ENCODE measurements at regions of chr16 and their contacts with region 1.

Region 1: DNA sequence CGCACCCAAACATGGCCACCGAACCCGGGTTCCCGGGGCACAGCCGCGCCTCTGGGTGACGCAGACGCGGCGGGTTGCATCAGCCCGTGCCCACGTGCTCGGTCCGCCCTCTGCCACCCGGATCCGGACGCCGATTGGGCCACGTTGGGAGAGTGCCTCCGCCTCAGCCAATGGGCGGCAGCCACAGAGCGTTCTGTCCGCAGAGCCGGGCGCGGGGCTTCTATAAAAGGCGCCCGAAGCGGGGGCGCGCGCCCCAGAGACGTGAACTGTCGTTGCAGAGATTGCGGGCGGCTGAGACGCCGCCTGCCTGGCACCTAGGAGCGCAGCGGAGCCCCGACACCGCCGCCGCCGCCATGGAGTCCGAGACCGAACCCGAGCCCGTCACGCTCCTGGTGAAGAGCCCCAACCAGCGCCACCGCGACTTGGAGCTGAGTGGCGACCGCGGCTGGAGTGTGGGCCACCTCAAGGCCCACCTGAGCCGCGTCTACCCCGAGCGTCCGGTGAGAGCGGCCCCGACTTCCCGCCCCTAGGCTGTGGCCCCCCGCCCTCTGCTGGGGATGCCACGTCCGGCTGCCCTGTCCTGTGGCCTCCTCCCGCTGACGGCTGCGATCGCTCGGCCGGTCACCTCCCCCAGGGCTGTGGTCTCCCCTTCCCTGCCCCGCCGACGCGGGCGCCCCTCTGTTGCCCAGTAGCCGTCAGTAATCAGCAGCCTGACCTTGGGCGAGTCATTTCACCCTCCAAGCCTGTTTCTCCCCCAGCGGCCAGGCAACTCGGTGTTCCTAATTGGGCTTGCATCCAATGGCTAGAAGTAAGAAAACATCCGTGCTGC is at the start of gene HERPUD1:
- DNase-seq: no peak
- ATAC-seq: peak; percentile 80
- H3K4me3 ChIP-seq: peak within 1 kb of the TSS; percentile 88 to 98 (median 95)
- H3K4me3 Mint-ChIP-seq: peak within 1 kb of the TSS; percentile 92
- H3K27ac ChIP-seq: peak within 1 kb of the TSS; percentile 98 to 99
- H3K27ac Mint-ChIP-seq: peak within 1 kb of the TSS; percentile 96
- H3K4me1 ChIP-seq: peaks cover 60 to 66% of the 10 kb centered on the region in 2 donors
- H3K4me1 Mint-ChIP-seq: peaks cover 55% of the 10 kb centered on the region
- H3K27me3 ChIP-seq: no peaks in the 10 kb centered on the region
- H3K27me3 Mint-ChIP-seq: no peaks in the 10 kb centered on the region
- CTCF ChIP-seq: no peak
- total RNA-seq, gene HERPUD1: 1,041 and 1,046 TPM in 2 replicates

Region 2: DNA sequence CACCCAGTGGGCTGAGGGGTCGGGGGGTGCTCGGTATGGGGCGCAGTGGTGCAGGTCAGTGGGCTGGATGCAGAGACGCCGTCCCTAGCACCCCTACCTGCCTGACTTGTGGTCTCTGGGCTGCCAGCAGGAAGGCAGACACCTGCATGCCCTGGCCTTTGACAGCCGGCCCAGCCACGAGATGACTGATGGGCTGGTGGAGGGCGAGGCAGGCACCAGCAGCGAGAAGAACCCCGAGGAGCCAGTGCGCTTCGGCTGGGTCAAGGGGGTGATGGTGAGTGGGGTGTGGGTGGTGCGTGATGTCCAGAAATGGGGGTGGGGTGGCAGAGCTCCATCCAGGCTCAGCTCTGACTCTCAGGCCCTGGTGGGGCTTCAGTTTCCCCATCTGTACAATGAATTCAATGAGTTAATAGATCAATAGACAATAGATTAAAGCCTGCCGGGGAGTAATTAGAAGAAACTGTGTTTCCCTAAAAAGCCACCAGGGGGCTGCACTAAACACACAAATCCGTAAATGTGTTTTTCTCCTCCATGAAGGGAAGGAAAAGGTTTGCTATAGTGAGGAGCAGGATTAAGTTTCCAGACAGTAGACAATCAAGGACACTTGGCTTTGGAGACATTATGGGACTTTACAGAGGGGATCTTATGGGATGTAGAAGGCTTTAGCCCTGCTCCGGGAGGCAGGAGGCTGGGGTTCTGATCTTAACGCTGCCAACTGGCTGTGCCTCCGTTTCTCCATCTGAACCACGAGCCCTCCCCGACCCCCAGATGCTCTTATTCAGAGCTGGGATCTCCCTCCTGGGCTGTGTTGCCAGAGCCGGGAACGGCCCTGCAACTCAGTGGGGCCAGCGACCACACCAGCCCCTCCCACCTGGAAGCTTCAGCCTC is 64.9 kb before region 1 on chr16:
- CTCF ChIA-PET with region 1: interaction called, 140 read pairs
- POLR2A ChIA-PET with region 1: interaction called, 68 read pairs
- intact Hi-C with region 1: loop called (anchors 1 kb)
- DNase-seq: peak; percentile 81
- ATAC-seq: no peak
- H3K4me3 ChIP-seq: no peak overlapping the region
- H3K4me3 Mint-ChIP-seq: peak overlapping the region; percentile 55
- H3K27ac ChIP-seq: no peak overlapping the region
- H3K27ac Mint-ChIP-seq: peak overlapping the region; percentile 69
- H3K4me1 ChIP-seq: peaks cover 21 to 59% of the 10 kb centered on the region in 2 donors
- H3K4me1 Mint-ChIP-seq: peaks cover 37% of the 10 kb centered on the region
- H3K27me3 ChIP-seq: no peaks in the 10 kb centered on the region
- H3K27me3 Mint-ChIP-seq: no peaks in the 10 kb centered on the region
- CTCF ChIP-seq: peak; percentile 89

Region 3: DNA sequence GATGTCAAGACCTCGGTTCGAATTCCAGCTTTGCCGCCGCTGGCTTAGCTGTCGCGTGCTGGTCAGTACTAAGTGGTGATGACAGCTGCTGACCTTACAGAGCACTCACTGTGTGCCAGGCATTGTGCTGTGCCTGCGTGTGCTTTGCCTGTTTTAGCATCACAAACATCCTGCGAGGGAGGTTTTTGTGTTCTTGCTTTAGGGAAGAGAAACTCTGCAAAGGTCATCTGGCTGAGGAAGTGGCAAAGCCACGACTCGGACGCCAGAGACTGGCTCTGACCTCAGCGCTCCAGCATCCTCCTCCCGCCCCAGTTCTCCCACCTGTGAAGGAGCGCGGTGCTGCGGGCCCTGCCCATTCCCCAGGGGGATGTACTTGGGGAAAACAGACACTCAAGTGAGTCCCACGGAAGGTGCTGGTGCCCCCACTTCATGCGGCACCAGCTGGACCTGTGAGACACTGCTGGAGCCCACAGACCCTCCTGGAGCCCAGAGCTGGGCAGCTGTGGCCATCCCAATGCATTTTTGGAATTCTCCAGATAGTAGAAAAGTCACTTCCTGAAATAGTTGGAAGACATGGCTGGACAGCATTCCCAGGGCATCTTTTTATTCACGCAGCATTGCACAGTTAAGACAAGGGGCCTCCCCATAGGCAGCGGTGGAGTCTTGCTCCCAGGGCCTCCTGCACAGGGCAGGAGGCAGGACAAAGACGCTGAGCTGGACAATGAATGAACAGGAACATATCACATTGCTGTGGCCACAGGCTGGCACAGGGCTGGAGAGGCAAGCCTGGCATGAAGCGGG is 20.1 kb before region 1 on chr16:
- CTCF ChIA-PET with region 1: interaction called, 12 read pairs
- POLR2A ChIA-PET with region 1: interaction called, 108 read pairs
- intact Hi-C with region 1: loop called (anchors 1 kb)
- DNase-seq: peak; percentile 87
- ATAC-seq: peak; percentile 87
- H3K4me3 ChIP-seq: peak overlapping the region in 3 of 5 experiments; percentile 12 to 48 (median 14)
- H3K4me3 Mint-ChIP-seq: peak overlapping the region; percentile 73
- H3K27ac ChIP-seq: peak overlapping the region; percentile 86 to 97
- H3K27ac Mint-ChIP-seq: peak overlapping the region; percentile 99
- H3K4me1 ChIP-seq: peaks cover 54 to 69% of the 10 kb centered on the region in 2 donors
- H3K4me1 Mint-ChIP-seq: peaks cover 69% of the 10 kb centered on the region
- H3K27me3 ChIP-seq: no peaks in the 10 kb centered on the region
- H3K27me3 Mint-ChIP-seq: no peaks in the 10 kb centered on the region
- CTCF ChIP-seq: no peak

Region 4: DNA sequence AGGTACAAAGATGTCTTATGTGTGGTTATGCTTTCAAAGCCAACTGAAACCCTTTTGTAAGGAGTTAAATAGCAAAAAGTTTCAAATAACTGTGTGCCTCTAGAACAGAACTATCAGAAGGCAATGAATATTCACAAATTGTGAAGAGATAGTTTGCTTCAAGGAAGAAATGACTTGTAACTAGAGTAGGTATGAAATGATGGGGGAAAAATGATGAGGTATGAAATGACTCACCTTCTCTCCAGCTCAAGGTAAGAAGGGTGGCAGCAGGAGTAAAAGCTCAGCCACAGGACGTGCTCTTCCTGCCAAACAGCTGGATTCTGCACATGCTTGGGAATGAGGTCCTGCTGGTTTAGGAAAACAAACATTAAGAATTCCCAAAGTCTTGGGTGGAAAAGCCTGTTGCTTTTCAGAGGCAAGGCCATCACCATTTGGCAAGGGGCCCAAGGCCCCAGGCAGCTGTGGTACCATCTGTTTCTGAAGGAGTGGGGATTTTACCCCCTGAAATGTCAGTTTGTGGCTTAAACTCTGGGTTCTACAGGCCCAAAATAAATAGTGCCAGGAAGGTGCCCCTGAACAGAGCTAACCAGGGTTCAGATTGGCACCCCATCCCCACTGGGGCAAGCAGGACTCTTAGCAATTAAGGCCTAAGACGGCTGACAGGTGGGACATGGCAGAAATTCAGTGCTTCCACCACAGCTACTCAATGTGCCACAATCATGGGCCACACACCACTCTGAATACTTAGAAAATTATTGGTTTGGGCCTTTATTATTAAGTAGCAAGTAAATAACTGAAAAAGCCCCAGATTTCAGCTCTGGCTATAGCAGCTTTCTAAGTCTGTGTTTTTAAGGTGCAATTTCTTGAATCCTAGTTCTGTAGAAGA is 13.1 kb after region 1 on chr16:
- CTCF ChIA-PET with region 1: interaction called, 11 read pairs
- POLR2A ChIA-PET with region 1: interaction called, 22 read pairs
- intact Hi-C with region 1: no loop called
- DNase-seq: peak; percentile 47
- ATAC-seq: no peak
- H3K4me3 ChIP-seq: no peak overlapping the region
- H3K4me3 Mint-ChIP-seq: no peak overlapping the region
- H3K27ac ChIP-seq: peak overlapping the region in 1 of 2 donors; percentile 63
- H3K27ac Mint-ChIP-seq: peak overlapping the region; percentile 59
- H3K4me1 ChIP-seq: peaks cover 27 to 40% of the 10 kb centered on the region in 2 donors
- H3K4me1 Mint-ChIP-seq: peaks cover 51% of the 10 kb centered on the region
- H3K27me3 ChIP-seq: no peaks in the 10 kb centered on the region
- H3K27me3 Mint-ChIP-seq: no peaks in the 10 kb centered on the region
- CTCF ChIP-seq: no peak

Region 5: GRCh38 chr16:56977216-56977615 is 45.1 kb after region 1 on chr16:
- CTCF ChIA-PET with region 1: no interaction called
- POLR2A ChIA-PET with region 1: no interaction called
- intact Hi-C with region 1: no loop called
- DNase-seq: no peak
- ATAC-seq: no peak
- H3K4me3 ChIP-seq: no peak overlapping the region
- H3K4me3 Mint-ChIP-seq: no peak overlapping the region
- H3K27ac ChIP-seq: no peak overlapping the region
- H3K27ac Mint-ChIP-seq: no peak overlapping the region
- H3K4me1 ChIP-seq: peaks cover 59 to 79% of the 10 kb centered on the region in 2 donors
- H3K4me1 Mint-ChIP-seq: peaks cover 78% of the 10 kb centered on the region
- H3K27me3 ChIP-seq: no peaks in the 10 kb centered on the region
- H3K27me3 Mint-ChIP-seq: no peaks in the 10 kb centered on the region
- CTCF ChIP-seq: no peak

Region 6: DNA sequence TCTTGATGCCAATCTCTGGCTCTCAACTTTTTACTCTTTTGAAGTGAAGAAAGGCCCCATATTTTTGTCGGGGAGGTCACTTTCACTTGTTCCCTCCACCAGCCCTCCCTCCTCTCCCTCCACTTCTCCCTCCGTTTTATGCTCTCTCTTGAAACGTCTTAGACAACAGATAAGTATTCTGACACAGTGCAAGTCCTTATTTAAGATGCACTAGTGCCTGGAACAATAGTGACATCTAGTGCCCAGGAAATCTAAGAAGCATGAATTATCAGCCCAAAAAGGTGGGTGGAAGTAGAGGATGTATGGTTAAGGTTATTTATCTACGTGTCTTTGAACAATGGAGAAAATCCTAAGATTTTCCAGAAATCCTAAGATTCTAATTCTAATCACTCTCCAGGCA is 235.8 kb after region 1 on chr16:
- CTCF ChIA-PET with region 1: no interaction called
- POLR2A ChIA-PET with region 1: no interaction called
- intact Hi-C with region 1: loop called (anchors 10 kb)
- DNase-seq: peak; percentile 73
- ATAC-seq: peak; percentile 60
- H3K4me3 ChIP-seq: no peak overlapping the region
- H3K4me3 Mint-ChIP-seq: no peak overlapping the region
- H3K27ac ChIP-seq: no peak overlapping the region
- H3K27ac Mint-ChIP-seq: no peak overlapping the region
- H3K4me1 ChIP-seq: no peaks in the 10 kb centered on the region
- H3K4me1 Mint-ChIP-seq: peaks cover 8% of the 10 kb centered on the region
- H3K27me3 ChIP-seq: no peaks in the 10 kb centered on the region
- H3K27me3 Mint-ChIP-seq: no peaks in the 10 kb centered on the region
- CTCF ChIP-seq: peak; percentile 73

Region 7: GRCh38 chr16:57591086-57591869 is 659.2 kb after region 1 on chr16:
- CTCF ChIA-PET with region 1: no interaction called
- POLR2A ChIA-PET with region 1: no interaction called
- intact Hi-C with region 1: no loop called
- DNase-seq: peak; percentile 69
- ATAC-seq: peak; percentile 86
- H3K4me3 ChIP-seq: no peak overlapping the region
- H3K4me3 Mint-ChIP-seq: no peak overlapping the region
- H3K27ac ChIP-seq: no peak overlapping the region
- H3K27ac Mint-ChIP-seq: no peak overlapping the region
- H3K4me1 ChIP-seq: peaks cover 15 to 19% of the 10 kb centered on the region in 2 donors
- H3K4me1 Mint-ChIP-seq: peaks cover 21% of the 10 kb centered on the region
- H3K27me3 ChIP-seq: peaks cover 0 to 4% (median 0%) of the 10 kb centered on the region in 4 experiments
- H3K27me3 Mint-ChIP-seq: peaks cover 25% of the 10 kb centered on the region
- CTCF ChIP-seq: peak; percentile 85

Measured in B cell (primary cell).